Activated CD4-positive, alpha-beta T cell treated with anti-CD3 and anti-CD28 coated beads, Interleukin-2, amount 10 ng/mL, durations not matched to agents 7 days and 5 days (primary cell): ENCODE measurements at regions of chr3 and their contacts with region 1.

Region 1: DNA sequence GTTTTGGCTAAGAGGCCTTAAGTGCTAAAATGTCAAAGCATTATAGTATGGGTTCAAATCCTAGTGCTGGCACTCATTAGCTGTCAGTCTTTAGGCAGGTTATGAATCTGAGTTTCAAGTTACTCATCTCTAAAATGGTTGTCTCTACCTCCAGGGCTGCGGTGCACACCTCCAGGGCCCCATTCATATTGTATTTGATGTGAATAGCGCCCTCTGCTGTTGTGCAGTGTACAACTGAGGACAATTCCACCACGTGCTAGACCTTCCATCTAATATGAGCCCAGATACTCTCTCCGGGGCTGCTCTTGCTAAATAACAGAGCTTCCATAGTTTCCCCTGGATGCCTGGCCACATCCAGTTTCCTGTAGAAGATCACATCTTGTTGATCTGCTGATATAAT is 54.3 kb downstream of the OXNAD1 start:
- DNase-seq: peak; percentile 91
- H3K4me3 Mint-ChIP-seq: no peak overlapping the region
- H3K27ac Mint-ChIP-seq: peak overlapping the region; percentile 83
- H3K4me1 Mint-ChIP-seq: peaks cover 72% of the 10 kb centered on the region
- H3K27me3 Mint-ChIP-seq: no peaks in the 10 kb centered on the region

Region 2: GRCh38 chr3:16264708-16265454 is 54.4 kb before region 1 on chr3 and contains the starts of genes DPH3 and OXNAD1:
- CTCF ChIA-PET with region 1: interaction called, 42 read pairs
- POLR2A ChIA-PET with region 1: no interaction called
- DNase-seq: peak; percentile 100
- H3K4me3 Mint-ChIP-seq: peak within 1 kb of the TSS; percentile 99
- H3K27ac Mint-ChIP-seq: peak within 1 kb of the TSS; percentile 98
- H3K4me1 Mint-ChIP-seq: peaks cover 42% of the 10 kb centered on the region
- H3K27me3 Mint-ChIP-seq: no peaks in the 10 kb centered on the region
- total RNA-seq, gene DPH3: 12.6 to 14.4 TPM
- total RNA-seq, gene OXNAD1: 64.0 to 70.4 TPM

Region 3: DNA sequence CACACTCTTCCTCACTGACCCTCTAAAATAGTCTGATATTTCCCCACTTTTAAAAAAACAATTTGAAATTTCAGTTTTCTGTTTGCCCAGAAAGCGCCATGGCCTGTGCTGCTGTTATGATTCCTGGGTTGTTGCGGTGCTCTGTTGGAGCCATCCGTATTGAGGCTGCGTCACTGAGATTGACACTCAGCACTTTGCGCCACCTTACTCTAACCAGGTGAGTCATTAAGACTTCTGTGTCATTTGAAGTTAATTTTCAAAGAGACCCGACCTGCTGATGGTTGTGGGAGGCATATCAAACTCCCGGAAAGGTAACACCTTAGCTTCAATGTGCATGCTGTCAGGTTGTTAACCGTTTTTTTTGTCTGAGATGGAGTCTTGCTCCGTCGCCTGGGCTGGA is 48.5 kb before region 1 on chr3:
- CTCF ChIA-PET with region 1: interaction called, 42 read pairs
- POLR2A ChIA-PET with region 1: no interaction called
- DNase-seq: no peak
- H3K4me3 Mint-ChIP-seq: no peak overlapping the region
- H3K27ac Mint-ChIP-seq: no peak overlapping the region
- H3K4me1 Mint-ChIP-seq: peaks cover 31% of the 10 kb centered on the region
- H3K27me3 Mint-ChIP-seq: no peaks in the 10 kb centered on the region